ENCODE measurements at regions of chr22 and their contacts with region 1.

Region 1: GRCh38 chr22:37316875-37317371 is 34.6 kb downstream of the CYTH4 start:
- DNase-seq: no peak
- H3K4me3 ChIP-seq: no peak overlapping the region
- CTCF ChIP-seq: peak; percentile 96

Region 2: DNA sequence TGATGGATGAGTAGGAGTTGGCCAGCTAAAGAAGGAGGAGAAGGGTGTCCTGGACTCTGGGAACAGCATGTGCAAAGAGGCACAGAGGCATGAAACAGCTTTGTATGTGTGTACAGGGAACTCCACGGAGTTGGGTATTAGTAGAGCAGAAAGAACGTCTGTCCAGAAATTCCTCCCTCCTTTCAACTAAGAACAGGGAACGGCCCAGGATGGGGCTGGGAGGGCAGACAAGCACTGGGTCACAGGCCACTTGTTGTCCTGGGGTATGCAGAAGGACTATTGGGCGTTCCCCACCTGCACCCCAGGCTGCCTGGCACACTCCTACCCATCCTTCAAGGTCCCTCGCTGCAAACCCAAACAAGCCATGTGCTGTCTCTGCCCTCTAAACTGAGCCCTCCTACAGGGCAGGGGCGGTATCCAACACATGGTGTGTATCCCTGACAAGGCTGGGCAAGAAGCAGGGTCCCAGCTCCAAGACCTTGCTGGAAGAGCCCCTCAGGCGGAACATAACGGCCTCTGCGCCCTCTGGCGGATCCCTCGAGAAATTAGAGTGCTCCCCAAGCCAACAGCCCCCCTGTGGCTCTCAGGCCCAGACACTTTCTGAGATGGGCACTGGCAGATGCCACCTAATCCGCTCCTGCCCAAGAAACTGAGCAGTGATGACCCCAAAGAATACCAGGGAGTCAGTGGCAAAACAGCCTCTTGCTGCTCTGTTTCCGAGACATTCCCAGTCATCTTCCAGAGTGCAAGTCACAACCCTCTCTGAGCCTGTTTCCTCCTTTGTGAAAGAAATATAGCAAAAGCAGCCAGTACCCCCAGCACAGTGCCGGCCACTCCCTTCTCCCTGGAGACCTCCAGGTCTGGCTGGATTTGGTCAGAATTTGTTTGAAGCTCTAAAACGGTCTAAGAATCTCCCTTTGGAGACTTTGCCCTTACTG is 112.0 kb after region 1 on chr22:
- CTCF ChIA-PET with region 1: interaction called, 105 read pairs
- POLR2A ChIA-PET with region 1: no interaction called
- DNase-seq: no peak
- H3K4me3 ChIP-seq: no peak overlapping the region
- CTCF ChIP-seq: peak; percentile 77

Region 3: DNA sequence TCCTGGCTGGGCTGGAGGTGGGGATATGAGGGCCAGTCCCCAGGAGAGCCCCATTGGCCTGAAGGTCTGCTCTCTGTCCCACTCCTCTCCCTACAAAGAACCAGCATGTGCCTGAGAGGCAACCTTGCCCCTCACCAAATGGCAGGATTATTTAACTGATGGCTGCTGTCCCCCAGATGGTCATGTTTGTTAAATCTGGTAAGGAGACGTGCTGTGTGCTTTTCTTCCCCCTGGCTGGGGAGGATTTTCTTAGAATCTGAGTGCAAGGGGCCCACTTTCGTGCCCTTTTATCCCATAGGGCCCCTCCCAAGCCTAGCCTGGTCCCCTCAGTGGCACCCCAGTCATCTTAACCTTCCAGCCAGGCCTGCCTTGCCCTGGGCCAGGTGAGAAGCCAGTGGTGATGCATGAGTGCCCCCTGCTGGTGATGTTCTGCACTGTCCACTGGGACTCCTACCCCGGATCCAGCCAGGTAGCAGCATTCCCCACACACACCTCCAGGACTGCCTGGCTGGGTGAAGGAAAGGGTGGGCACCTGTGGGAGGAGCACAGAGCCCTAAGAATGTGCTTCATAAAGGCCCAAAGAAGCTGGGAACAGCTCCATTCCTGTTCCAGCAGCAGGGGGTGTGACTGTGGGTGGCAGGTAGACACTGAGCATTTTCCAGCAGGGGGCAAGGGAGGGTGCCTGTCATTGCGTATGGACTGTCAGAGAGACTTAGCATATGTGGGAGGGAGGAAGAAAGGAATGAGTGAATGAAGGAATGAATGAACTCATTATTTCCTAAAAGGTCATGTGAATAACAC is 140.4 kb after region 1 on chr22:
- CTCF ChIA-PET with region 1: interaction called, 559 read pairs
- POLR2A ChIA-PET with region 1: no interaction called
- DNase-seq: no peak
- H3K4me3 ChIP-seq: no peak overlapping the region
- CTCF ChIP-seq: peak; percentile 90

Region 4: GRCh38 chr22:37472418-37473006 is 155.6 kb after region 1 on chr22:
- CTCF ChIA-PET with region 1: interaction called, 36 read pairs
- POLR2A ChIA-PET with region 1: no interaction called
- DNase-seq: no peak
- H3K4me3 ChIP-seq: no peak overlapping the region
- CTCF ChIP-seq: peak; percentile 61